Left cardiac atrium (tissue), 4 donors: ENCODE measurements at regions of chr11 and their contacts with region 1.

Region 1: GRCh38 chr11:3709977-3710376 is 38.8 kb upstream of the CHRNA10 start:
- DNase-seq: no peak
- ATAC-seq: no peak

Region 2: GRCh38 chr11:3626308-3626951 is 83.5 kb before region 1 on chr11:
- intact Hi-C with region 1: no loop called
- DNase-seq: peak; percentile 59
- ATAC-seq: peak; percentile 51 to 78

Region 3: DNA sequence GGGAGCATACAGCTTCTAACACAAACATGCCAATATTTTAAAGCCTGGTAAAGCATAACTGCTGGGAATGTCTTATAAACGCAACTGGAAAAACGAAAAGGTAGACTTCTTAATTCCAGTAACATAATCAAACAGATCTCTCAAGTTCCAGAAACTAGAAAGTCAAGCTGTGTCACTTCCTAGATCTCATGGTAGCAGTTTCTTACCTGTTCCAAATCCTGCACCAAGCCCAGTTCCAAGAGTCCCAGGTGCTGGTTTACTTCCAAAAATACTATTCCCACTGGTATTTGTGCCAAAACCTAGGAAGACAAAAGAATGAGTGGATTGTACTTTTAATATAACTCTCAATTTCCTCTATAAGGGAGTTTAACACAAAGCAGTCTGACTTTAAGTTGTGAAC is 43.1 kb after region 1 on chr11:
- intact Hi-C with region 1: no loop called
- DNase-seq: no peak
- ATAC-seq: no peak

Region 4: GRCh38 chr11:3767536-3767935 is 57.6 kb after region 1 on chr11:
- intact Hi-C with region 1: loop called in 1 of 2 experiments (anchors 10 kb)
- DNase-seq: no peak
- ATAC-seq: no peak

Region 5: DNA sequence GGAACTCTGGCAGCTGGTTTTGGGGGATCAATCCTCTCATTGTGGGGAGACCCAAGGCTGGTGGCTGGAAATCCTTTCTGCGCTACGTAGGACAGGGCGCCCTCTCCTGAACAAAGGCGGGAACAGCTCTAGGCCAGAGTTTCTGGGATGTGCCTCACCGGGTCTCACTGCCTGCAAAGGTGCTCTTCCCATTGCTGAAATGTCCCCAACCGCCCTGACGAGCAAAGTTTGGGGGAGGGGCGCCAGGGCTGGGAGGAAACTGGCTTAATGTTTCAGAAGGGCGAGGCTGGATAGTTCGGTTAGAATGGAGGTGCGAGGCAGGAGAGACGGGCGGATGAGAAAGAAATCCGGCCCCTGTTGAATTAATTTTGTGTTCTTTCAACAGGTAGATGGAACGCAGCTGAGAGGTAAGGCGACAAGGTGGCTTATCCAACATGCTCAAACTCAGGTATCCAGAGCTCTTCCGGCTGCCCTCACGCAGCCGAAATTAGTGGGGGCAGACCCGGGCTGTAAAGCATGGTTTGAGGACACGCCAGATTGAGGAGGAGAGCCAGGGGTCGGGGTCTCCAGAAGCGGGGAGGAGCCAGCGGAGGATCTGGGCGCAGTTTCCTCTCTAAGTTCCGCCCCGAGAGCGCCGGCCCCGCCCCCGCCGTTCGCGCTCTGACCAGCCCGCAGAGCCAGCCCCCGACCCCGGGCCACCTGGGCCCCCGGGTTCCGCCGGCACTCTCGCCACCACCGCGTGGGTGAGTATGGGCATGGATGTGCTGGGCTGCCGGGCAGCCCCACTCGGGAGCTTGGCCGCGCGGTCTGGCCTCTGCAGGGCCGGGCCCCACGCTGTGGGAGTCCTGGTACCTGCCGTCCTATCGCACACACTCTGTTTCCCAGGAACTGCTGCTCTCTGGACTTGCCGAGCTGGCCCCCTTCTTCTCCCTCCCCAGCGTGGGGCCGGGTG is 98.2 kb after region 1 on chr11 and contains the start of gene PGAP2:
- intact Hi-C with region 1: no loop called
- DNase-seq: peak; percentile 76
- ATAC-seq: peak; percentile 85 to 87
- total RNA-seq, gene PGAP2: 10.9 to 15.3 TPM